CD8-positive, alpha-beta T cell (primary cell): ENCODE measurements at regions of chr18 and their contacts with region 1.

Region 1: GRCh38 chr18:49510393-49511115 is 23.5 kb upstream of the C18orf32 start:
- DNase-seq: peak; percentile 15 to 78 (median 51)
- ATAC-seq: peak; percentile 76
- H3K4me3 ChIP-seq: no peak overlapping the region
- H3K4me3 Mint-ChIP-seq: no peak overlapping the region
- H3K27ac ChIP-seq: no peak overlapping the region
- H3K27ac Mint-ChIP-seq: no peak overlapping the region
- H3K4me1 ChIP-seq: no peaks in the 10 kb centered on the region
- H3K4me1 Mint-ChIP-seq: no peaks in the 10 kb centered on the region
- H3K27me3 ChIP-seq: peaks cover 0 to 3% of the 10 kb centered on the region in 2 experiments
- H3K27me3 Mint-ChIP-seq: peaks cover 22% of the 10 kb centered on the region
- CTCF ChIP-seq: peak; percentile 76

Region 2: GRCh38 chr18:49500201-49500921 is 10.2 kb before region 1 on chr18:
- CTCF ChIA-PET with region 1: interaction called, 15 read pairs
- POLR2A ChIA-PET with region 1: no interaction called
- intact Hi-C with region 1: no loop called
- DNase-seq: no peak
- ATAC-seq: no peak
- H3K4me3 ChIP-seq: no peak overlapping the region
- H3K4me3 Mint-ChIP-seq: no peak overlapping the region
- H3K27ac ChIP-seq: no peak overlapping the region
- H3K27ac Mint-ChIP-seq: no peak overlapping the region
- H3K4me1 ChIP-seq: no peaks in the 10 kb centered on the region
- H3K4me1 Mint-ChIP-seq: no peaks in the 10 kb centered on the region
- H3K27me3 ChIP-seq: peaks cover 0 to 2% of the 10 kb centered on the region in 2 experiments
- H3K27me3 Mint-ChIP-seq: peaks cover 18% of the 10 kb centered on the region
- CTCF ChIP-seq: no peak

Region 3: GRCh38 chr18:49747876-49748275 is 237.3 kb after region 1 on chr18:
- CTCF ChIA-PET with region 1: no interaction called
- POLR2A ChIA-PET with region 1: no interaction called
- intact Hi-C with region 1: no loop called
- DNase-seq: no peak
- ATAC-seq: no peak
- H3K4me3 ChIP-seq: no peak overlapping the region
- H3K4me3 Mint-ChIP-seq: no peak overlapping the region
- H3K27ac ChIP-seq: no peak overlapping the region
- H3K27ac Mint-ChIP-seq: no peak overlapping the region
- H3K4me1 ChIP-seq: peaks cover 14% of the 10 kb centered on the region
- H3K4me1 Mint-ChIP-seq: peaks cover 22% of the 10 kb centered on the region
- H3K27me3 ChIP-seq: no peaks in the 10 kb centered on the region
- H3K27me3 Mint-ChIP-seq: peaks cover 5% of the 10 kb centered on the region
- CTCF ChIP-seq: no peak

Region 4: DNA sequence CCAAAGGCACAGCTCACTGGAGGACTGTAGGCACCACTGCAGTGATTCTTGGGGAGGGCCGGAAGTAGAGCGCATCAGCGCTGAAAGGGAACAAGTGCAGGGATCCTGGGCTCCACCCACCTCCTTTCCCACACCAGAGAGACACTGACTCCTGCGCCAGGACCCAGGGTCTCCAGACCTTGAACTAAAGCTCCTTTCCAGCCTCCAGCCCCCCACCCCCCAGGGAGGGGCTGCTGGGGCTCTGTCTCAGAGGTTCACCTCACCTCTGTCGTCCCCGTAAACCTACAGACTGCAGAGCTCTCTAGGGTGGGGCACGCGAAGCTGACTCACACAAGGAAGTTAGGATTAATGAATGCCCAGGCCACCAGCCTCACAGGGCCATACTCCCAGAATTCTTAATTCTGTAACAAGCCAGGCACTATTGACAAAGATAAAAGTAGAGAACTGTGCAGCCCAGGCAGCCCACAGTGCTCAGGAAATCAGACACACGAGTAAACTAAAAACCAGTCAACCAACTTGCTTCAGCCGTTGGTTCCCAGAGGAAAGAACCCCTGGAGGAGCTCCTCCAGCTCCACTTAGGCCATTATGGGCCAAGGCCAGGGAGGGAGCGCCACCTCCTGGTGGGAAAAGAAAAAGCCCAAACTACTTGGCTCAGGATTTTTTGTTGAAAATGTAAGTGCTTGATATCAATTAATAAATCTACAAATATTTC is 347.9 kb after region 1 on chr18:
- CTCF ChIA-PET with region 1: interaction called, 221 read pairs
- POLR2A ChIA-PET with region 1: no interaction called
- intact Hi-C with region 1: loop called in 1 of 2 experiments (anchors 1 kb)
- DNase-seq: peak; percentile 13 to 71 (median 62)
- ATAC-seq: no peak
- H3K4me3 ChIP-seq: no peak overlapping the region
- H3K4me3 Mint-ChIP-seq: no peak overlapping the region
- H3K27ac ChIP-seq: no peak overlapping the region
- H3K27ac Mint-ChIP-seq: no peak overlapping the region
- H3K4me1 ChIP-seq: no peaks in the 10 kb centered on the region
- H3K4me1 Mint-ChIP-seq: no peaks in the 10 kb centered on the region
- H3K27me3 ChIP-seq: no peaks in the 10 kb centered on the region
- H3K27me3 Mint-ChIP-seq: peaks cover 2% of the 10 kb centered on the region
- CTCF ChIP-seq: peak; percentile 81

Region 5: DNA sequence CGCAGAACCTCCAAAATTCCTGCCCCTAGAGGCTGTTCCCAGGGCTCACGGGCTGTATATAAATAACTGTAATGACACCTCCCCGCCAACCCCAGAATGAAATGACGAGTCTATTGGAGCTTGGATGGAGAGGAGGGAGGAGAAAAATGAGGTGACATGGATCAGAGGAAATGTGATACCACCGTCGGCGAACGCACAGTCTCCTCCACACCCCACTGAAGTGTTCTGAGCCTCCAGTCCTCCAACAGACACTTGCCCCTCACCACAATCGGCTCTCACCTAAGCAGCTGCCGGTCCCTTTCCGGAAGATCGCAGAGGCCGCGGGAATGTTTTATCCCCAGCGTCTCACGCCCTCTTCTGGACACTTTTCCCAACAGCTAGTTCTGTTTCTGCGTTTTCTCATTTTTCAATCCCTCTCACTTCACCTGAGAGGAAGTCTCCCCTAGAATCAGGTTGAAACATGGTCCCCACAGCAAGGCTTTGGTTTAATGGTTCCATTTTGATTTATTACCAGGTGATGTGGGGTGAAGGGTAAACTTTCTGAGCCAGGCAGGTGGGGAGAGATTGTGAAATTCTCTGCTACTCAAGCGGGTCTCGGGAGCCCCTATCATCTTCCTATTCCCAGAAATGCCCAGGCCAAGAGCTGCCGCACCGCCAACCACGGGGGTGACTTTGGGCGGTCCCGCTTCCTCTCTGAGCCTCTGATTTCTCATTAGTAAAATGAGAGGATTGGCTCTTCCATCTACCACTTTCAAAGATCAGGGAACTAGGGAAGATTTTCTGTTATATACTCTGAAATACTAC is 693.4 kb after region 1 on chr18:
- CTCF ChIA-PET with region 1: no interaction called
- POLR2A ChIA-PET with region 1: no interaction called
- intact Hi-C with region 1: loop called in 1 of 2 experiments (anchors 5 kb)
- DNase-seq: peak in 2 of 9 experiments; percentile 15 to 21
- ATAC-seq: no peak
- H3K4me3 ChIP-seq: no peak overlapping the region
- H3K4me3 Mint-ChIP-seq: no peak overlapping the region
- H3K27ac ChIP-seq: no peak overlapping the region
- H3K27ac Mint-ChIP-seq: no peak overlapping the region
- H3K4me1 ChIP-seq: peaks cover 5% of the 10 kb centered on the region
- H3K4me1 Mint-ChIP-seq: peaks cover 9% of the 10 kb centered on the region
- H3K27me3 ChIP-seq: no peaks in the 10 kb centered on the region
- H3K27me3 Mint-ChIP-seq: peaks cover 50% of the 10 kb centered on the region
- CTCF ChIP-seq: no peak

Region 6: DNA sequence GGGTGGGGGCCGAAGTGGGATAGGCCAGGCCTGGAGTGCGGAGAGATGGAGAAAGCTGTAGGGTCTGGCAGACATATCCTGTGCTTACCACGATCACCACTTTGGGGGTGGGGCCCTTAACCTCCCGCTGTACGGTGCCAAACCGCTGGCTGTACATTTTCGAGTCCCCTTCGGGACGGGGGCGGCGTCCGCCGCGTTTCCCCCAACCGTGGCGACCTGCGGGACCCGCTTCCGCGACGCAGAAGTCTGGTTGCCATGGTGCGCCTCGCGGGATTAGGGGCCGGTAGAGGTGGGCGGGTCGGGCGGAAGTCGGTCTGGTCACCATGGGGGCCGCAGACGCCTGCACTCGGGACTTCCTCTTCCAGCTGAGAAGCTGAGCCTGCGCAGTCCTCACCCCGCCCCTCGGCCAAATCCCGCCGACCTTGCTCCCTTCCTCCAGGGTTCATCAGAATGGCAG is 755.7 kb after region 1 on chr18 and contains the start of gene CFAP53:
- CTCF ChIA-PET with region 1: interaction called, 7 read pairs
- POLR2A ChIA-PET with region 1: no interaction called
- intact Hi-C with region 1: loop called (anchors 2 to 5 kb)
- DNase-seq: peak; percentile 58 to 93 (median 86)
- ATAC-seq: peak; percentile 83
- H3K4me3 ChIP-seq: peak within 1 kb of the TSS; percentile 38 to 67
- H3K4me3 Mint-ChIP-seq: peak within 1 kb of the TSS; percentile 88
- H3K27ac ChIP-seq: peak within 1 kb of the TSS; percentile 43 to 85
- H3K27ac Mint-ChIP-seq: peak within 1 kb of the TSS; percentile 85
- H3K4me1 ChIP-seq: peaks cover 18% of the 10 kb centered on the region
- H3K4me1 Mint-ChIP-seq: peaks cover 24% of the 10 kb centered on the region
- H3K27me3 ChIP-seq: no peaks in the 10 kb centered on the region
- H3K27me3 Mint-ChIP-seq: no peaks in the 10 kb centered on the region
- CTCF ChIP-seq: no peak
- total RNA-seq, gene CFAP53: 0.22 to 0.36 TPM